ENCODE measurements at regions of chr7 and their contacts with region 1.

Region 1: DNA sequence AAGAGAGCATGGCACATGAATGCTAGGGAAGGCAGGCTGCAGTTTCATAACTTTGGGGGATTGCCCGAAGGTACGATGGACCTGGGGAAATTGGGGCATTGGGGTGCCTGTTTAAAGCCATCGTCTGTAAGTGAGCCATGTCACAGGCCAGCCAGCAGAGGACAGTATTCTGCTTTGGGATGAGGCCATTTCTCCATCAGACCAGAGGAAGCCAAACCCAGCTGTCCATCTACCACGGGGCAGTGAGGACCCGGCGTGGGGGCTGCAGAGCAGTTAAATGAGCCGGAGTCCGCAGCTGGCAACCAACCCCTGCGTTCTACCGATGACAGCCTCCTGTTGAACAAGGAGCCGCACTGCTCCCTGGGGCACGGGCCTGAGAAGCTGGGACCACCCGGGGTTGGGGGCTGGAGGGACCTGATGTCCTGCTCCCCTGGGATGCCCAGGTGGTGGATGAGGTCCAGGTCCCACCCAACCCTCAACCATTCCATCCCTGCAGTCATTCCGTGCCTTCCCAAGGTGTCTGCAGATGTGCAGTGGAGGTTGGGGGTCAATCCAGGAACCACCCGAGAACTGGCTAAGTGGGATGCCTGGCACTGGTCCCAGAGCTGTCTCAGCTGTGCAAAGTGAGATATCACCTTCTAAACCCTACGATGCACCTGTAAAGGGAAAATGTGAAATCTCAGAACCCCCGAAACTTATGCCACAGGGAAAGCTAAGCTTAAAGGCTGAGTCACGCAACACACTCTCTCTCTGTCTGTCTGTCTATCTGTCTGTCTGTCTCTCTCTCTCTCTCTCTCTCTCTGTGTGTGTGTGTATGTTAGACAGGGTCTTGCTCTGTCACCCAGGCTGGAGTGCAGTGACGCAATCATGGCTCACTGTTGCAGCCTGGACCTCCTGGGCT is 12.1 kb upstream of the RHBDD2 start:
- DNase-seq: peak; percentile 30 to 49
- ATAC-seq: peak; percentile 70 to 93 (median 89)
- H3K4me3 ChIP-seq: no peak overlapping the region
- H3K27ac ChIP-seq: no peak overlapping the region
- H3K4me1 ChIP-seq: peaks cover 0 to 25% (median 6%) of the 10 kb centered on the region in 9 donors
- H3K27me3 ChIP-seq: no peaks in the 10 kb centered on the region
- CTCF ChIP-seq: peak; percentile 80 to 97 (median 91)

Region 2: GRCh38 chr7:76020031-76020714 is 153.4 kb after region 1 on chr7:
- intact Hi-C with region 1: loop called (anchors 1 to 5 kb)
- DNase-seq: peak; percentile 78 to 82
- ATAC-seq: peak; percentile 74 to 86 (median 82)
- H3K4me3 ChIP-seq: no peak overlapping the region
- H3K27ac ChIP-seq: peak overlapping the region in 1 of 10 donors; percentile 4
- H3K4me1 ChIP-seq: peaks cover 0 to 27% (median 15%) of the 10 kb centered on the region in 9 donors
- H3K27me3 ChIP-seq: no peaks in the 10 kb centered on the region
- CTCF ChIP-seq: peak; percentile 79 to 96 (median 92)

Measured in heart right ventricle (tissue), 16 donors.